ENCODE measurements at regions of chr14 and their contacts with region 1.

Region 1: DNA sequence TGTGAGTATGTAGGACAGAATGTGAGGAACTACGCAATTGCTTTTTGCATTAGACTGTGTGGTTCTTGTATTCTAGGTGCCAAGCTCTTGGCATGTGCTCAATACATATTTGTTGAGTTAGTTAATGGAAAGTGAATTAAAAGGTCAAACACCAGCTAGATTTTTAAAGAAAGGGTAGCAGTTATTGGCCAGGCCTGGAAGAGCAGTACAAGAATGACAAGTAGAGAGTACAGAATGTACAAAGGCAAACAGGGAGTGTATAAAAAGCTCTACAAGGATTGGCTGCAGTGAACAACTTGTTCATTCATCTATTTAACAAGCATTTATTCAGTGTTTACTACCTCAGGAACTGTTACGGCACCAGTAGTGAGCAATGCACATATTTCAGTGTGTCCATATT is 854.0 kb upstream of the SEL1L start:
- DNase-seq: peak in 1 of 2 donors; percentile 74
- H3K4me3 ChIP-seq: no peak overlapping the region
- H3K27ac ChIP-seq: peak overlapping the region; percentile 84 to 94
- H3K4me1 ChIP-seq: peaks cover 0 to 10% of the 10 kb centered on the region in 2 donors
- H3K27me3 ChIP-seq: no peaks in the 10 kb centered on the region
- CTCF ChIP-seq: no peak

Region 2: DNA sequence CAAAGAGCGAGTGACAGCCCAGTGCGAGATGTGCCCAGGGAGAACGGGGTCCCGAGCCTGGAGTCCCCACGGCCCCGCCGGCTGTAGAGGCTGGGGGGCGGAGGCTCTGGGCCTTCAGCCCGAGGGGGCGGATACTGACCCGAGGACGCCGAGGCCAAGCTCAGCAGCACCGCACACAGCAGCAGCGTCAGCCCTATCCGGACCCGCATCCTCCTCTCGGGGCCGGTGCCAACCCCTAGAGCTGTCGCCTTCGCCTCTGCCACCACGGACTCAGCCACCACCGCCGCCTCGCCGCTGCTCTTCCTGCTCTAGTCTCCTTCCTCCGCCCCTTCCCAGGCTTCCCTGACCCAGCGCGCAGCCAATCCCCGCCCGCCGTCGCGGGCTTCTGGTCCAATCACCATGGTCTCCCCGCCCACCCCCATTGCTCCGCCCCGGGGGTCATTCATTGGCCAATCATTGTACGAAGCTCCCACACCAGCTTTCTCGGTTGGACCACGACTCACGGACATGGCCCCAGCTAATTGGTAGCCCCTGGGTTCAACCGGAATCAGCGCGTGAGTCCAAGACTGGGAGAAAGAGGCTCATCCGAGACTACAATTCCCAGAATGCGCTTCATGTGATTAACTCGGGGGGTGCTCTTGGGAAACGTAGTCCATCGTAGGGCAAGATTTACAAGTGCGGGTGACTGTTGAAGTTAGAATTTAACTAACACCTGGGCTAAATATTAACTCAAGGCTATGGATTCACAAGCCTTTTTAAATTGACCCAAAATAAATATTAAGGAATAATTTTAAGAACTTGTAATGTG is 854.0 kb before region 1 on chr14 and contains the start of gene SEL1L:
- intact Hi-C with region 1: loop called (anchors 5 kb)
- DNase-seq: peak; percentile 100
- H3K4me3 ChIP-seq: peak within 1 kb of the TSS; percentile 95 to 99
- H3K27ac ChIP-seq: peak within 1 kb of the TSS; percentile 64 to 79
- H3K4me1 ChIP-seq: peaks cover 0 to 33% of the 10 kb centered on the region in 2 donors
- H3K27me3 ChIP-seq: no peaks in the 10 kb centered on the region
- CTCF ChIP-seq: no peak
- total RNA-seq, gene SEL1L: 37.3 TPM

Region 3: GRCh38 chr14:82009076-82009475 is 378.6 kb before region 1 on chr14:
- intact Hi-C with region 1: loop called (anchors 10 kb)
- DNase-seq: no peak
- H3K4me3 ChIP-seq: no peak overlapping the region
- H3K27ac ChIP-seq: no peak overlapping the region
- H3K4me1 ChIP-seq: no peaks in the 10 kb centered on the region
- H3K27me3 ChIP-seq: no peaks in the 10 kb centered on the region
- CTCF ChIP-seq: no peak

Measured in ascending aorta (tissue), 2 donors.